Activated T-helper 1 cell treated with anti-CD3 and anti-CD28 coated beads, Interleukin-12 subunit alpha, Interleukin-12 subunit beta, Interleukin-2, Interleukin-4 antibody, amounts not matched to agents 30 ng/mL and 10 ng/mL and 1 ng/mL, durations not matched to agents 14 hours and 24 hours and 36 hours (primary cell): ENCODE measurements at regions of chr4 and their contacts with region 1.

Region 1: DNA sequence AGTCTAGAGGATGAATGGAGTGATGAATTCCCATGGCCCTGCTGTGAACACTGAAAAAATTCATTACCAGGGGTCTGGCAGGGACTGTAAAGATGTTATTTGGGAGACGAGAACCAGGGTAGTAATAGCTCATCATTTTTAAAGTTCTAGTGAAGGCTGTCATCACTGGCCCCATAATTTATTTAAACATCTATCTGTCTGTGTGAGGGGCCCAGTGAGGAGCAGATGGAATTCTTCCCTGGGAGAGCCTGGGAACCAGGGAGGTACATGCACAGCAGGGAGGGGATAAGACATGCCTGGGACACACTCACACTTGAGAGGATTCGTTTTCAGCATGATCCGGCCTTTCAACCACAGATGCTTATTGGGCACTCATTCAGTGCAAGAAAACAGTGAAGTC is 162.0 kb downstream of the PDGFRA start:
- DNase-seq: no peak
- H3K4me3 Mint-ChIP-seq: no peak overlapping the region
- H3K27ac Mint-ChIP-seq: no peak overlapping the region
- H3K4me1 Mint-ChIP-seq: no peaks in the 10 kb centered on the region
- H3K27me3 Mint-ChIP-seq: no peaks in the 10 kb centered on the region

Region 2: DNA sequence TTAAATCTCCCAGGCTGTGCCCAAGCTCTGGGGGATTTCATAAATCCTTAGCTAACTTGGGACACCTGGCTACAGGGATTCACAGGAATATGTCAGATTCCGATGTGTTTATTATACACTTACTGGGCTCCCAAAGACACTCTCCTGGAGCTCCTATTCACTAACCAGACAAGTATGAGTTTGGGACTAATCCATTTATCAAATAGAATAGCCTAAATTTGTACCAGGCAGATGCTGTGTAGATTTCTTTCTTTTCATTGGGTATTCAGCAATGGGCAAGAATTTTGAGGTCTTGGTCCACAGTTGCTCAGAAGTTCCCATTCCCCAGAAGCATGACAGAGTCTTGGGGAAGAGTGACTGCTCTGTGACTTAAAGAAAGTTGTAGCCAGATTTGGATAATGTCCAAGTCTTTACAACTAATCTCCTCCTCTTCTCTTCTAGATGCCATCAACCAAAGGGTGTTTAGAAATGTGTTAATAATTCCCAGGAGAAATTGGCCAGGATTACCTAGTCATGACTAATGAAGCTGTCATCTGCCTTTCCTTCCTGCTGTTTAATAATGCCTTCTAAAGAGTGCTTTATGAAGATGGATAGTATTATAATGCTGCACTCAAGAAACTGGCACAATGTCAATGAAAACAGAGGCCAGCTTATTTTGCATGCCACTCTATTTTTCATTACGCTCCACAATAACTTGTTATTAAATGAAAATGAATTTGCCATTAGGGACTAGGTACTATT is 447.6 kb before region 1 on chr4:
- intact Hi-C with region 1: no loop called
- DNase-seq: no peak
- H3K4me3 Mint-ChIP-seq: no peak overlapping the region
- H3K27ac Mint-ChIP-seq: no peak overlapping the region
- H3K4me1 Mint-ChIP-seq: no peaks in the 10 kb centered on the region
- H3K27me3 Mint-ChIP-seq: peaks cover 2% of the 10 kb centered on the region

Region 3: DNA sequence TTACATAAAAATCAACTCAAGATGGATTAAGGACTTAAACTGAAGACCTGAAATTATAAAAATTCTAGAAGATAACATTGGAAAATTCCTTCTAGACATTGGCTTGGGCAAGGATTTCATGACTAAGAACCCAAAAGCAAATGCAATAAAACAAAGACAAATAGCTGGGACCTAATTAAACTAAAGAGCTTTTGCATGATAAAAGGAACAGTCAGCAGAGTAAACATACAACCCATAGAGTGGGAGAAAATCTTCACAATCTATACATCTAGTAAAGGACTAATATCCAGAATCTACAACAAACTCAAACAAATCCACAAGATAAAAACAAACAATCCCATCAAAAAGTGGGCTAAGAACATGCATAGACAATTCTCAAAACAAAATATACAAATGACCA is 44.7 kb before region 1 on chr4:
- intact Hi-C with region 1: loop called (anchors 2 kb)
- DNase-seq: no peak
- H3K4me3 Mint-ChIP-seq: no peak overlapping the region
- H3K27ac Mint-ChIP-seq: no peak overlapping the region
- H3K4me1 Mint-ChIP-seq: no peaks in the 10 kb centered on the region
- H3K27me3 Mint-ChIP-seq: peaks cover 1% of the 10 kb centered on the region

Region 4: DNA sequence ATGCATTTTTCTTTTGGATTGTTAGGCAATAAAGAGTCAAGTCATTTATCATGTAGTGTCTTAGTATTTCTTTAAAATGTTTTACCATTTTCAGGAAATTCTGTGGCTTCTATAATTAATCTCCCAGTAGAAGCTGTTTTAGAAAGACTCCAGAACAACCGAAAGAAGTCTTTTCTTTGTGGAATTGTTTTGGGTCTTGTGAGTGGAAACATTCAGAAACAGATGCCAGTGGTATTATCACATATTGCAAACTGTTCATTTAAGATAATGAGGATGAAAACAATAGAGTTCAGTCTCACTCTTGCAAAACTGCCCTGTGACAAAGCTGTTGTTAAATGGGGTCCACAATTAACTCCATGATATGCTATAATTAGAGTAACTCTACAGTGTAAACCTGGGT is 55.5 kb after region 1 on chr4:
- intact Hi-C with region 1: no loop called
- DNase-seq: no peak
- H3K4me3 Mint-ChIP-seq: no peak overlapping the region
- H3K27ac Mint-ChIP-seq: no peak overlapping the region
- H3K4me1 Mint-ChIP-seq: no peaks in the 10 kb centered on the region
- H3K27me3 Mint-ChIP-seq: peaks cover 2% of the 10 kb centered on the region